Activated CD4-positive, alpha-beta memory T cell treated with anti-CD3 and anti-CD28 coated beads, Interleukin-2, amount 10 ng/mL, durations not matched to agents 7 days and 5 days (primary cell): ENCODE measurements at regions of chr14 and their contacts with region 1.

Region 1: GRCh38 chr14:62126879-62127478 is 364.8 kb downstream of the SNAPC1 start:
- DNase-seq: no peak
- H3K4me3 Mint-ChIP-seq: no peak overlapping the region
- H3K27ac Mint-ChIP-seq: no peak overlapping the region
- H3K4me1 Mint-ChIP-seq: no peaks in the 10 kb centered on the region
- H3K27me3 Mint-ChIP-seq: peaks cover 55% of the 10 kb centered on the region

Region 2: GRCh38 chr14:61894452-61895077 is 232.4 kb before region 1 on chr14:
- CTCF ChIA-PET with region 1: interaction called, 29 read pairs
- POLR2A ChIA-PET with region 1: no interaction called
- DNase-seq: peak; percentile 54
- H3K4me3 Mint-ChIP-seq: no peak overlapping the region
- H3K27ac Mint-ChIP-seq: no peak overlapping the region
- H3K4me1 Mint-ChIP-seq: peaks cover 11% of the 10 kb centered on the region
- H3K27me3 Mint-ChIP-seq: peaks cover 29% of the 10 kb centered on the region

Region 3: GRCh38 chr14:62097072-62097471 is 29.9 kb before region 1 on chr14:
- CTCF ChIA-PET with region 1: no interaction called
- POLR2A ChIA-PET with region 1: no interaction called
- DNase-seq: no peak
- H3K4me3 Mint-ChIP-seq: no peak overlapping the region
- H3K27ac Mint-ChIP-seq: no peak overlapping the region
- H3K4me1 Mint-ChIP-seq: no peaks in the 10 kb centered on the region
- H3K27me3 Mint-ChIP-seq: peaks cover 20% of the 10 kb centered on the region